ENCODE measurements at regions of chr5 and their contacts with region 1.

Region 1: DNA sequence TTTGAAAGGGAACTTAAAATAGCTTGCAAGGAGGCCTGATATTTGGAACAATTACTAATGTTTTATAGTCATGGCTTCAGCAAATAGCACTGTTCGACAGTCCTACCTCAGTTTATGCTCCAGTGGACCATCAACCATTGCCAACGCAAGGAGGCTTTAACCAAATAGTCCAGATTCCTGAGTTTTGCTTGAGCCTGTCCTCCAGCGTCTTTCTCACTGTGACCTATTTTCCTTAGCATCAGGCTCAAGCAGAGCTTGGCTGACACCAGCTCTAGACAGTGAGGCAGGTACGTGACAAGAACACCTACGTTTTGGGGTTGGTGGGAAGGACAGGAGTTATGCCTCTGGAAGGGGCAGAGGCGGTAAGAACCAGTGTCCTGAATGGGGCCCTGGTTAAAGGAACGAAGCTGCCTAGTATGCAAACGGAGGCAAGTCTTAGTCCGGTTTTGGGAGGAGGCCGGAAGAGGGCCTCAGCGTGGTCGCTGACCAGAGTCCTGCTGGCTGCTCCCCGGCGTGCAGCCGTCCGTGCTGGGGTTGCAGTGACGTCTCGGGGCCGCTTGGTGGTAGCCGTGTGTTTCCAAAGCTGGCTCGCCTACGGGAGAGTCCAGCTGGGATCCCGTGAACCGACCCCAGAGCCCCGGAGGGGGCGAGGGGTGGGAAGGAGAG is 998 bp upstream of the FGF18 start:
- DNase-seq: peak; percentile 89 to 94
- H3K4me3 ChIP-seq: peak overlapping the region; percentile 47
- H3K4me3 Mint-ChIP-seq: peak overlapping the region; percentile 93
- H3K27ac Mint-ChIP-seq: peak overlapping the region; percentile 82
- H3K4me1 ChIP-seq: no peaks in the 10 kb centered on the region
- H3K4me1 Mint-ChIP-seq: peaks cover 9% of the 10 kb centered on the region
- H3K27me3 ChIP-seq: no peaks in the 10 kb centered on the region
- H3K27me3 Mint-ChIP-seq: no peaks in the 10 kb centered on the region
- CTCF ChIP-seq: peak; percentile 91 to 93

Region 2: GRCh38 chr5:171310819-171311697 is 107.4 kb before region 1 on chr5:
- CTCF ChIA-PET with region 1: no interaction called
- POLR2A ChIA-PET with region 1: no interaction called
- intact Hi-C with region 1: no loop called
- DNase-seq: peak; percentile 52 to 54
- H3K4me3 ChIP-seq: peak overlapping the region; percentile 86
- H3K4me3 Mint-ChIP-seq: peak overlapping the region; percentile 65
- H3K27ac Mint-ChIP-seq: no peak overlapping the region
- H3K4me1 ChIP-seq: no peaks in the 10 kb centered on the region
- H3K4me1 Mint-ChIP-seq: peaks cover 10% of the 10 kb centered on the region
- H3K27me3 ChIP-seq: no peaks in the 10 kb centered on the region
- H3K27me3 Mint-ChIP-seq: peaks cover 2% of the 10 kb centered on the region
- CTCF ChIP-seq: no peak

Region 3: GRCh38 chr5:171484460-171484899 is 66.0 kb after region 1 on chr5:
- CTCF ChIA-PET with region 1: interaction called, 5 read pairs
- POLR2A ChIA-PET with region 1: no interaction called
- intact Hi-C with region 1: loop called (anchors 1 kb)
- DNase-seq: peak in 1 of 2 experiments; percentile 47
- H3K4me3 ChIP-seq: no peak overlapping the region
- H3K4me3 Mint-ChIP-seq: no peak overlapping the region
- H3K27ac Mint-ChIP-seq: no peak overlapping the region
- H3K4me1 ChIP-seq: no peaks in the 10 kb centered on the region
- H3K4me1 Mint-ChIP-seq: no peaks in the 10 kb centered on the region
- H3K27me3 ChIP-seq: no peaks in the 10 kb centered on the region; the same call in 1 of the 2 replicates
- H3K27me3 Mint-ChIP-seq: peaks cover 13% of the 10 kb centered on the region
- CTCF ChIP-seq: peak; percentile 77 to 78

Region 4: GRCh38 chr5:171606414-171607024 is 188.1 kb after region 1 on chr5:
- CTCF ChIA-PET with region 1: no interaction called
- POLR2A ChIA-PET with region 1: no interaction called
- intact Hi-C with region 1: loop called (anchors 5 kb)
- DNase-seq: no peak
- H3K4me3 ChIP-seq: no peak overlapping the region
- H3K4me3 Mint-ChIP-seq: no peak overlapping the region
- H3K27ac Mint-ChIP-seq: no peak overlapping the region
- H3K4me1 ChIP-seq: no peaks in the 10 kb centered on the region
- H3K4me1 Mint-ChIP-seq: no peaks in the 10 kb centered on the region
- H3K27me3 ChIP-seq: no peaks in the 10 kb centered on the region
- H3K27me3 Mint-ChIP-seq: peaks cover 10% of the 10 kb centered on the region
- CTCF ChIP-seq: peak; percentile 30 to 47

Region 5: DNA sequence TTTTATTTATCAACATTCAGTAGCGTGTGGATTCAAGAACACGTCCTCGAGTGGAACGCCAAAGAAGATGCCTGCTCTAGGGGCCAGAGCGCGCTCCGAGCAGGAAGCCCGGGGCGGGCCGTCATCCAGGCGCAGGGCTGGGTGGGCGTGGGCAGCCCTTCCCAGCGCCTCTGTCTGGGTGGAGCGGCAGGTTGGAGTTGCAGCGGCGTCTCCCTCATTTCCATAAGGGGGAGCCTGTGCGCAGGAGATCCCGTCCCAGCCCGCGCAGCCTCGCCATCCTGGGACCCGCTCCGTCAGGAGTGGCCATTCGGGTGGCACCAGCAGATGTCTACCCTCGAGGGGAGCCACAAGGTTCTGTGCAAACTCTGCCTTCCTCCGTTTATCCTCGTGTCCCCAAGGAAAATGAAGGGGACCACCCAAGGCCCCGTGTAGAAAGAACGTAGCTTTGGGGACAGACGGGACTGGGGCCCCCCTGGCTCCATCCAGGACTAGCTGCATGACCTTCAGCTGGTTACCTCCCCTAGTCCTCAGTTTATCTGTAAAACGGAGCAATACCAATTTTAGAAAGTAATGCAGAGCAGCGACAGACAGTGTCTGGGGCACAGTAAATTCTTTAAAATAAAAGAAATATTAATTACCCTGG is 211.7 kb after region 1 on chr5:
- CTCF ChIA-PET with region 1: interaction called, 5 read pairs
- POLR2A ChIA-PET with region 1: no interaction called
- intact Hi-C with region 1: loop called (anchors 5 kb)
- DNase-seq: peak; percentile 78 to 80
- H3K4me3 ChIP-seq: no peak overlapping the region
- H3K4me3 Mint-ChIP-seq: peak overlapping the region; percentile 53
- H3K27ac Mint-ChIP-seq: no peak overlapping the region
- H3K4me1 ChIP-seq: peaks cover 11% of the 10 kb centered on the region
- H3K4me1 Mint-ChIP-seq: no peaks in the 10 kb centered on the region
- H3K27me3 ChIP-seq: no peaks in the 10 kb centered on the region; the same call in none of the 2 replicates
- H3K27me3 Mint-ChIP-seq: peaks cover 11% of the 10 kb centered on the region
- CTCF ChIP-seq: peak; percentile 58 to 71

Region 6: GRCh38 chr5:171850324-171851285 is 432.2 kb after region 1 on chr5:
- CTCF ChIA-PET with region 1: interaction called, 4 read pairs
- POLR2A ChIA-PET with region 1: no interaction called
- intact Hi-C with region 1: loop called (anchors 1 kb)
- DNase-seq: peak in 1 of 2 experiments; percentile 50
- H3K4me3 ChIP-seq: no peak overlapping the region
- H3K4me3 Mint-ChIP-seq: no peak overlapping the region
- H3K27ac Mint-ChIP-seq: no peak overlapping the region
- H3K4me1 ChIP-seq: no peaks in the 10 kb centered on the region
- H3K4me1 Mint-ChIP-seq: peaks cover 10% of the 10 kb centered on the region
- H3K27me3 ChIP-seq: no peaks in the 10 kb centered on the region
- H3K27me3 Mint-ChIP-seq: no peaks in the 10 kb centered on the region
- CTCF ChIP-seq: peak; percentile 39 to 57

Region 7: DNA sequence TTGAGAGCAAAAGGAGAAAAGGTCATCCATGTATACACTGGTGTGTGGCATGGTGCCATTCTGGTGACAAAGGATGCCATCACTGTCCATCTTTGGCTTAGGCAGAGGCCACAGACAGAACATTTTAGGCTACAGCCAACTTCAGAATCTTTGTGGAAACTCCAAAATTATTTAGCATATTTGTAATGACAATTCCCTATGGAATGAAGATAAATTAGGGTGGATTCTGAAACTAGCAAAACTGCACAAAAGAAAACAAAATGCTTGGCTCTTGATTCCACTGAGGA is 495.5 kb after region 1 on chr5:
- CTCF ChIA-PET with region 1: interaction called, 11 read pairs
- POLR2A ChIA-PET with region 1: no interaction called
- intact Hi-C with region 1: no loop called
- DNase-seq: no peak
- H3K4me3 ChIP-seq: no peak overlapping the region
- H3K4me3 Mint-ChIP-seq: no peak overlapping the region
- H3K27ac Mint-ChIP-seq: no peak overlapping the region
- H3K4me1 ChIP-seq: no peaks in the 10 kb centered on the region
- H3K4me1 Mint-ChIP-seq: peaks cover 4% of the 10 kb centered on the region
- H3K27me3 ChIP-seq: no peaks in the 10 kb centered on the region
- H3K27me3 Mint-ChIP-seq: no peaks in the 10 kb centered on the region
- CTCF ChIP-seq: no peak

Region 8: GRCh38 chr5:172044631-172045314 is 626.3 kb after region 1 on chr5:
- CTCF ChIA-PET with region 1: no interaction called
- POLR2A ChIA-PET with region 1: no interaction called
- intact Hi-C with region 1: loop called (anchors 10 kb)
- DNase-seq: no peak
- H3K4me3 ChIP-seq: no peak overlapping the region
- H3K4me3 Mint-ChIP-seq: no peak overlapping the region
- H3K27ac Mint-ChIP-seq: no peak overlapping the region
- H3K4me1 ChIP-seq: no peaks in the 10 kb centered on the region
- H3K4me1 Mint-ChIP-seq: no peaks in the 10 kb centered on the region
- H3K27me3 ChIP-seq: no peaks in the 10 kb centered on the region
- H3K27me3 Mint-ChIP-seq: peaks cover 2% of the 10 kb centered on the region
- CTCF ChIP-seq: no peak